Left ventricle myocardium superior (tissue), 1 donor: ENCODE measurements at regions of chr1 and their contacts with region 1.

Region 1: DNA sequence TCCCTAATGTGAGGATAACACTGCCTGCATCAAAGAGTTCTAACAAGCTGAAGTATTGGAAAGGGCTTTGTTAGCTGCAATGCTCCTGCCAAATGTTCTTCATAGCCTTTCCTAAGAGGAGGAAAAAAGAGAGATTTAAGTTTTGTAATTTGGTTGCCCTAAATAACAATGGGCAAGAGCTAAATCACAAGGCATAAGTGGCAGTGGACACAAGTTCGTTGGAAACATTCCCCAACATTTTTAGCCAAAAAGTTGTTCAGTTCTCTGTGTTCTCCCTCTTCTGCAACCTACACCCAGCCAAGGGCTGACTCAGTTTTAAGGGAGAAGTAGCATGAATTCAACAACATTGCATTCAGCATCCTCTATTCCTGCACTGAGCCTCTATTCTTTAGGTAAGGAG is 2.6 kb upstream of the UQCRHL start:
- DNase-seq: no peak
- ATAC-seq: no peak

Region 2: GRCh38 chr1:15650433-15650832 is 159.6 kb before region 1 on chr1:
- intact Hi-C with region 1: no loop called
- DNase-seq: no peak
- ATAC-seq: no peak

Region 3: DNA sequence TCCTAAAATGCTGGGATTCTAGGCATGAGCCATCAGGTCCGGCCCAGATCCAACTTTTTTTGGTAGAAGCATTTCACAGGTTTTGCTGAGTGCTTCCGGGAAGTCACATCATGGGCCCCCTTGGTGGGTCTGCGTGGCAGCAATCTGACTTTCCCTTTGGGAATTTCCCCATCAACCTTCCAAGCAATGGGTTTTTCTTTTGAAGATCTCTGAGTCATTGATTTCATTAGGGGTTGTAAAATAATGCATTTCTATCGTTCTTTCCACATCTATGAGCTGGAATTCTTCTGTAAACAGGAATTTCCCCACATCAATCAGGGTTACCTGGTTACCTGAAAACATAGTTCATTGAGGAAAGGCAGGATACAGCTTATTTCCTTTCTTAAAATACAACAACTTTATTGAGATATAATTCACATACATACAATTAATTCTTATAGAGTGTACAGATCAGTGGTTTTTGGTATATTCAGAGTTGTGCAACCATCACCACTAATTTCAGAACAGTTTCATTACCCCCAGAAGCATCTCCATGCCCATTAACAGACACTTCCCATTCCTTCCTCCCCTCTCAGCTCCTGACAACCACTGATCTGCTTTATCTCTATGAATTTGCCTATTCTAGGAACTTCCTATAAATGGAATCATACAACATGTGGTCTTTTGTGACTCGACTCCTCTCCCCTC is 175.7 kb after region 1 on chr1:
- intact Hi-C with region 1: loop called (anchors 10 kb)
- DNase-seq: no peak
- ATAC-seq: no peak

Region 4: DNA sequence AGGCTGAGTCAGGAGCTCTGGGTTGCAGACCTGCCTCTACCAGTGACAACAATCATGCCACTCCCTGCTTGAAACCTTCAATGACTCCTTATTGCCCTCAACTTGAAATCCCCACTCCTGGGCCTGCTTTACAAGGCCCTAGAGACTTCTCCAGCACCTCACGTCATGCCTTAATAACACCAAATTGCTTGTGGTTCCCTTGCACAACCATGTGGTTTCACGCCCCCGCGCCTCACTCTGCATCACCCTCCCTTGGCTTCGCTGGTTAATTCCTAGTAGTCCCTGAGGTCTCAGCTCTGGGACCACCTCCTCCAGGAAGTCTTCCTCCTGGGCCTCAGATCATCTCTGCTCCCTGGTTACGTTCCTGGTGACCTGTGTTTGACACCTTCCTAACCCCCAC is 312.8 kb after region 1 on chr1:
- intact Hi-C with region 1: no loop called
- DNase-seq: peak; percentile 25
- ATAC-seq: no peak